Activated B cell treated with CpG ODN at 0.5 μM for 24 hours (primary cell): ENCODE measurements at regions of chr11 and their contacts with region 1.

Region 1: DNA sequence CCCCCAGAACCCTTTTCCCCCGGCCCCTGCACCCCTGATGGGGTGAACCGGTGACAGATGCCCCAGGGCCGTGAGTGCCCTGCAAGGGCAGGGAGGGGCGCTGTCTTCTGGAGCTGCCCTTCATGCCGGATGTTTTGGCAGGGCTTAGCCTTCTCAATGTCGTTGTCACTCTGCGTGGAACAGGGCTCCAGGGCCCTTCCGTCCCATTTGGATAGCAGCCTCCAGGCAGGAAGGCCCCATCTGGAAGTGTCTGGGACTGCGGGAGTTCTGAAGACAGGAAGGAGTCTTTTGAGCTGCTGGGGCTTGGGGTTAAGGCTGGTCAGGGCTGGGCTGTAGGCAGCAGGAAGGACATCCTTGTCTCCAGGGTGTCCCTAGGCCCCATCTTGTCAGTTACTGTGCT is 4.6 kb downstream of the FRMD8 start:
- DNase-seq: no peak
- ATAC-seq: no peak
- H3K4me3 Mint-ChIP-seq: peak overlapping the region; percentile 19
- H3K27ac Mint-ChIP-seq: no peak overlapping the region
- H3K4me1 Mint-ChIP-seq: peaks cover 56% of the 10 kb centered on the region
- H3K27me3 Mint-ChIP-seq: no peaks in the 10 kb centered on the region
- CTCF ChIP-seq: no peak

Region 2: DNA sequence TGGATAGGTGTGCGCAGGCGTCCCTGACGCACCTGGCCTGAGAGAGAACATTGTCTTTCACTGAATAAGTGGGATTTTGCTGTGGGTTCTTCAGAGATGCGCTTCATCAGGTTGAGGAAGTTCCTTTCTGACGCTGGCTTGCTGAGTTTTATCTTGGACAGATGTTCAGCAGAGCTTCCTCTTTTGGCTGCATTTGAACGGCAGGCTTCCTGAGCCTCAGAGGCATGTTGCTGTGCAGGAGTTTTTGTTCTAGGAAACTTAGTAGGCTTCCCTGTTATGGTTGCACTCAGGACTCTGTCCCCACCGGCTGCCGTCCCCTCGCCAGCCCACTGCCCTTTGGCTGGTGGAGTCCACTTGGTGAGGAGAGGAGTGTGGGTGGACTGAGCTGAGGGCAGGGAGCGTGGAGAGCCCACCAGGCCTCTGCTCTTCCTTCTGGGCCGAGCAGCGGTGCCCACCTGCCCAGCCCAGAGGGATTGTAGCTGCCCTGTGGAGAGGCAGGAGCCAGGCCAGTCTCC is 12.7 kb after region 1 on chr11:
- CTCF ChIA-PET with region 1: interaction called, 6 read pairs
- POLR2A ChIA-PET with region 1: interaction called, 64 read pairs
- intact Hi-C with region 1: loop called (anchors 1 kb)
- DNase-seq: peak; percentile 46
- ATAC-seq: peak; percentile 73
- H3K4me3 Mint-ChIP-seq: peak overlapping the region; percentile 75
- H3K27ac Mint-ChIP-seq: peak overlapping the region; percentile 96
- H3K4me1 Mint-ChIP-seq: peaks cover 49% of the 10 kb centered on the region
- H3K27me3 Mint-ChIP-seq: no peaks in the 10 kb centered on the region
- CTCF ChIP-seq: no peak